BJ (cell line): ENCODE measurements at regions of chr3 and their contacts with region 1.

Region 1: GRCh38 chr3:81302045-81302444 is 459.4 kb downstream of the GBE1 start:
- DNase-seq: no peak
- H3K4me3 ChIP-seq: no peak overlapping the region
- H3K27me3 ChIP-seq: no peaks in the 10 kb centered on the region
- CTCF ChIP-seq: peak; percentile 69

Region 2: DNA sequence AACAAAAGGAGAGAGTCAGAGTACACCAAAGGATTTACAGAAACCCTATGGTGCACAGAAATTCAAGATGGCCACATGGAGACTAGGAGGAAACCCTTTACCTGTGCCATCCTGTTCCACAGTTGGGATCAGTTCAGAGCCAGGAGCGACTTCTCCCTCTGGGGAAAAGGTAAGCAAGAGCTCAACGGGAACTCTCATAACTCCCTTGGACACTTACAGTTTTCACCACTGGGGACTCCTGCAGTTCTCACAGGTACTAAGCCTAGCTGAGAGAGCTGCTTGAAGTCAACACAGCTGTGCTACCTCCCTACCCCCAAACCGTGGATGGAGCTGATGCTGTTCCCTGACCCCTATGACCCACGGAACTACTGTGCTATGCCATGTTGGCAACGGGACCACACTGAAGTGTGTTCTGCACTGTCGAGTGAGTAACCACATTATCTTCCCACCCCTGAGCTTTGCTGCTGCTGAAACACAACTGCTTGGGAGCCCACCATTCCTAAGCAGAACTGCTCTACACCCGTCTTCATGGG is 147.4 kb before region 1 on chr3:
- CTCF ChIA-PET with region 1: no interaction called
- POLR2A ChIA-PET with region 1: no interaction called
- DNase-seq: no peak
- H3K4me3 ChIP-seq: no peak overlapping the region
- H3K27me3 ChIP-seq: no peaks in the 10 kb centered on the region
- CTCF ChIP-seq: no peak

Region 3: GRCh38 chr3:81315030-81315429 is 13.0 kb after region 1 on chr3:
- CTCF ChIA-PET with region 1: interaction called, 21 read pairs
- POLR2A ChIA-PET with region 1: no interaction called
- DNase-seq: no peak
- H3K4me3 ChIP-seq: no peak overlapping the region
- H3K27me3 ChIP-seq: no peaks in the 10 kb centered on the region
- CTCF ChIP-seq: no peak

Region 4: GRCh38 chr3:81338676-81339555 is 36.9 kb after region 1 on chr3:
- CTCF ChIA-PET with region 1: interaction called, 19 read pairs
- POLR2A ChIA-PET with region 1: no interaction called
- DNase-seq: no peak
- H3K4me3 ChIP-seq: no peak overlapping the region
- H3K27me3 ChIP-seq: no peaks in the 10 kb centered on the region
- CTCF ChIP-seq: peak; percentile 57